Caco-2 (cell line): ENCODE measurements at regions of chr1 and their contacts with region 1.

Region 1: DNA sequence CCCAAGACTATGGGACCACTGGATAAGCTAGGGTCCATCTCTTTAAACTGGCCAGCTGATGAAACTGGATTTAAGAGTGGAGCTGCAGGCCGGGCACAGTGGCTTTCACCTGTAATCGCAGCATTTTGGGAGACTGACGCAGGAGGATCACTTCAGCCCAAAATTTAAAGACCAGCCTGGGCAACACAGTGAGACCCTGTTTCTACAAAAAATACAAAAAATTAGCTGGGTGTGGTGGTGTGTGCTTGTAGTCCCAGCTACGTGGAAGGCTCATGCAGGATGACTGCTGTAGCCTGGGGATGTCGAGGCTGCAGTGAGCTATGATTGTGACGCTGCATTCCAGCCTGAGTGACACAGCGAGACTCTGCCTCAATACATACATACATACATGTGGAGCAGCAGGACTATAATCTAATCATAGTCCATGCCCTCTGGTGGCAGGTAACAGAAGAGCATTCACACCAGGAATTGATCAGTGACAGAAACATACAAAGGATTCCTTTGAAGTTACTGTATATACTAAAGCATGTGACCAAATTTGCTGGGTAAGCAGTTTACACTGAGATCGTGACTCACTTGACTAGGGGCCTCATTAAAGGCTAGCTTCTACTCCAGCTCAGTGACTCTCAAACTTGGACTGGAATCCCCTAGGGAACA is 101.5 kb upstream of the SLFNL1 start:
- DNase-seq: peak; percentile 59
- H3K4me3 ChIP-seq: no peak overlapping the region
- H3K4me3 Mint-ChIP-seq: no peak overlapping the region
- H3K27ac Mint-ChIP-seq: no peak overlapping the region
- H3K4me1 ChIP-seq: no peaks in the 10 kb centered on the region
- H3K4me1 Mint-ChIP-seq: peaks cover 2% of the 10 kb centered on the region
- H3K27me3 ChIP-seq: no peaks in the 10 kb centered on the region
- H3K27me3 Mint-ChIP-seq: no peaks in the 10 kb centered on the region
- CTCF ChIP-seq: peak in 1 of 2 experiments; percentile 52

Region 2: DNA sequence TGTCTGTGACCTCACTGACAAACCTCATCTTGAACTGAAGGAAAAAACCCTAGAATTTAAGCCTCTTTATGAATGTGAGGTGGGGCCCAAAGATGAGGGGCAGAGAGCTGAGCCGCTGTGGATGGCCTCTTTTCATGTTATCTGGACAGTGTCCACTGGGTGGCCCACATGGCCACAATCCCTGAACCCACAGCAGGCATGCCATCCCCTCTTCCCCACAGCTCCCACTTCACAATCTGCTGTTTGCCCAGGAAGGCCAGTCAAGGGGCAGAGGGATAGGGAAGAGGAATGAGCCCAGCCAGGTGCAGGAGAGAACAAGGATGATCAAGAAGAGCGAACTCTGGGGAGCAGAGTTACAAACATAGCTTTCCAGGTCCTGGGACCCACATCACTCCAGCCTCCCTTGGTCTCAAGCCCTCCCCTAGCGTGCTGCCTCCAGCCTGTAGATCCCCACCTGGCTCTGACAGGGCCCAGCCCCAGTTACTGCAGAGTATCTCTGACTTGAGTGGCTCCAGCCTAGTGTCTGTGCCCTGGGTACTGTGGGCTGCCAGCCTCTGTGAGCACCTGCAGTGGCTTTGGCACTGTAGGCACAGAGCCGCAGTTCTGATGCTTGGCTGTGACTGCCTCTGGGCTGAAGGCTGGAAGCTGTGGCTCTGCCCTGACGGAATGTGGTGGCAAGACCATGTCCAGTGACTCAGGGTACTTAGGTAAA is 99.5 kb before region 1 on chr1:
- CTCF ChIA-PET with region 1: interaction called, 12 read pairs
- POLR2A ChIA-PET with region 1: no interaction called
- intact Hi-C with region 1: loop called (anchors 5 kb)
- DNase-seq: peak in 1 of 2 experiments; percentile 28
- H3K4me3 ChIP-seq: no peak overlapping the region
- H3K4me3 Mint-ChIP-seq: peak overlapping the region; percentile 45
- H3K27ac Mint-ChIP-seq: peak overlapping the region; percentile 82
- H3K4me1 ChIP-seq: no peaks in the 10 kb centered on the region
- H3K4me1 Mint-ChIP-seq: peaks cover 7% of the 10 kb centered on the region
- H3K27me3 ChIP-seq: no peaks in the 10 kb centered on the region
- H3K27me3 Mint-ChIP-seq: no peaks in the 10 kb centered on the region
- CTCF ChIP-seq: peak; percentile 15 to 30